CD8-positive, alpha-beta T cell (primary cell): ENCODE measurements at regions of chr2 and their contacts with region 1.

Region 1: GRCh38 chr2:237744613-237745249 is 53.8 kb upstream of the RBM44 start:
- DNase-seq: peak; percentile 59 to 90 (median 79)
- ATAC-seq: peak; percentile 78
- H3K4me3 ChIP-seq: no peak overlapping the region
- H3K4me3 Mint-ChIP-seq: no peak overlapping the region
- H3K27ac ChIP-seq: peak overlapping the region in 1 of 2 experiments; percentile 37
- H3K27ac Mint-ChIP-seq: peak overlapping the region; percentile 76
- H3K4me1 ChIP-seq: peaks cover 6% of the 10 kb centered on the region
- H3K4me1 Mint-ChIP-seq: peaks cover 41% of the 10 kb centered on the region
- H3K27me3 ChIP-seq: no peaks in the 10 kb centered on the region
- H3K27me3 Mint-ChIP-seq: no peaks in the 10 kb centered on the region
- CTCF ChIP-seq: peak; percentile 98

Region 2: GRCh38 chr2:236691799-236692167 is 1052.9 kb before region 1 on chr2:
- CTCF ChIA-PET with region 1: no interaction called
- POLR2A ChIA-PET with region 1: no interaction called
- intact Hi-C with region 1: no loop called
- DNase-seq: no peak
- ATAC-seq: no peak
- H3K4me3 ChIP-seq: no peak overlapping the region
- H3K4me3 Mint-ChIP-seq: no peak overlapping the region
- H3K27ac ChIP-seq: no peak overlapping the region
- H3K27ac Mint-ChIP-seq: no peak overlapping the region
- H3K4me1 ChIP-seq: no peaks in the 10 kb centered on the region
- H3K4me1 Mint-ChIP-seq: no peaks in the 10 kb centered on the region
- H3K27me3 ChIP-seq: peaks cover 0 to 2% of the 10 kb centered on the region in 2 experiments
- H3K27me3 Mint-ChIP-seq: peaks cover 12% of the 10 kb centered on the region
- CTCF ChIP-seq: no peak

Region 3: GRCh38 chr2:237154082-237154638 is 590.6 kb before region 1 on chr2:
- CTCF ChIA-PET with region 1: interaction called, 3 read pairs
- POLR2A ChIA-PET with region 1: no interaction called
- intact Hi-C with region 1: loop called in 1 of 2 experiments (anchors 5 kb)
- DNase-seq: peak in 8 of 9 experiments; percentile 34 to 75 (median 54)
- ATAC-seq: peak; percentile 81
- H3K4me3 ChIP-seq: no peak overlapping the region
- H3K4me3 Mint-ChIP-seq: no peak overlapping the region
- H3K27ac ChIP-seq: no peak overlapping the region
- H3K27ac Mint-ChIP-seq: no peak overlapping the region
- H3K4me1 ChIP-seq: peaks cover 14% of the 10 kb centered on the region
- H3K4me1 Mint-ChIP-seq: peaks cover 20% of the 10 kb centered on the region
- H3K27me3 ChIP-seq: no peaks in the 10 kb centered on the region
- H3K27me3 Mint-ChIP-seq: no peaks in the 10 kb centered on the region
- CTCF ChIP-seq: peak; percentile 59

Region 4: GRCh38 chr2:237572021-237572741 is 172.6 kb before region 1 on chr2:
- CTCF ChIA-PET with region 1: interaction called, 12 read pairs
- POLR2A ChIA-PET with region 1: no interaction called
- intact Hi-C with region 1: no loop called
- DNase-seq: peak; percentile 67 to 92 (median 85)
- ATAC-seq: peak; percentile 94
- H3K4me3 ChIP-seq: no peak overlapping the region
- H3K4me3 Mint-ChIP-seq: no peak overlapping the region
- H3K27ac ChIP-seq: no peak overlapping the region
- H3K27ac Mint-ChIP-seq: no peak overlapping the region
- H3K4me1 ChIP-seq: no peaks in the 10 kb centered on the region
- H3K4me1 Mint-ChIP-seq: peaks cover 3% of the 10 kb centered on the region
- H3K27me3 ChIP-seq: no peaks in the 10 kb centered on the region
- H3K27me3 Mint-ChIP-seq: peaks cover 11% of the 10 kb centered on the region
- CTCF ChIP-seq: peak; percentile 91

Region 5: DNA sequence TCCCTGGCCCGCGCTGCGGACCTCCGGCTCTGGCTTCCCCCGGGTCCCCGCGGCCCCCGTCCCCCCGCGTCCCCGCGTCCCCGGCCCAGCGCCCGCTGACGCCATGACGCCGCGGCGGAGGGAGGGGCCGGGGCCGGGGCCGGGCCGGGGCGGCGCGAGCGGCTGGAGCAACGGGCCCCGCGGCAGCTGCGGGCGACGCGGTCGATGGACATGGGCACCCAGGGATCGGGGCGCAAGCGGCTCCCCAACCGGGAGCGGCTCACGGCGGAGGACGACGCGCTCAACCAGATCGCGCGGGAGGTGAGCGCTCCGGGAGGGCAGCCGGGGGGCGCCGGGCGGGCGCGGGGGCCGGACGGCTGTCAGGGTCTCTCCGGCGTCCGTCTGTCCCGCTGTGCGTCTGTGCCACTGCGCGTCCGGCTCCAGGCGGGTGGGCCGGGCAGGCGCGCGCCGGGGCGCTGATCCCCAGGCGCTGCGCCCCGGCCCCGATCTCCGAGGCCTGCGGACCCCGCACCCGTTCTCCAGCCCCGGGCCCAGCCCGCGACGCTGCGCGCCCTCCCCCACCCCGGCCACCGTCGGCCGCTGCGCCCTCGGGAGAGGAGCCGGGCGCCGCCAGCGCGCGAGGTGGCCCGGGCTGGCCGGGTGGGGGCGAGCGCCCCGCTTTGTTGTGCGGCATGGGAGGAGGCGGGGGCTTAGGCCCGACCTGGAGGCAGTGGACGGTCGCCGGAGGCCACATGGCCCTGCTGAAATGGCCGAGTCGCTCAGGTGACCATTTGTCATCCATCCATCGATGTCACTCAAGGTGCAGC is 117.1 kb before region 1 on chr2 and contains the start of gene LRRFIP1:
- CTCF ChIA-PET with region 1: interaction called, 29 read pairs
- POLR2A ChIA-PET with region 1: no interaction called
- intact Hi-C with region 1: loop called in 1 of 2 experiments (anchors 1 kb)
- DNase-seq: peak in 3 of 9 experiments; percentile 20 to 32 (median 26)
- ATAC-seq: peak; percentile 72
- H3K4me3 ChIP-seq: peak within 1 kb of the TSS; percentile 24 to 29
- H3K4me3 Mint-ChIP-seq: peak within 1 kb of the TSS; percentile 88
- H3K27ac ChIP-seq: no peak within 1 kb of the TSS
- H3K27ac Mint-ChIP-seq: peak within 1 kb of the TSS; percentile 83
- H3K4me1 ChIP-seq: peaks cover 8% of the 10 kb centered on the region
- H3K4me1 Mint-ChIP-seq: peaks cover 26% of the 10 kb centered on the region
- H3K27me3 ChIP-seq: peaks cover 0 to 6% of the 10 kb centered on the region in 2 experiments
- H3K27me3 Mint-ChIP-seq: peaks cover 20% of the 10 kb centered on the region
- CTCF ChIP-seq: no peak
- total RNA-seq, gene LRRFIP1: 127 to 128 TPM

Region 6: DNA sequence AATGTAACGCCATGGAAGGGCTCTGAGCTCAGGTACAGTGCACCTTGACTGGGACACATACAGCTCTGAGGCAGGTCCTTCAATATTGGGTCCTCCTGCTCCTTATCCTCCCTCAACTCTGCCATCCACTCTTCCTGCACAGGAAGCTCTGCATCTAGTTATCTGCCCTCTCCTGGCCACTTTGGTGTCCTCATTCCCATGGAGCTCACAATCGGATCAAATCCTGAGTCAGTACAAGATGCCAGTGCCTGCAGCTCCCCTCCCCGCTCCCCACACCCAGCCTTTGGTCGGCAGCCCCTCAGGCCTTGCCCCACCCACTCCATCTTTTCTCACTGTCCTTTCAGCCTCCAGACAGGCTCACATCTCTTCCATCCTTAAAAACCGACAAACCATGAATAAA is 59.3 kb before region 1 on chr2:
- CTCF ChIA-PET with region 1: interaction called, 18 read pairs
- POLR2A ChIA-PET with region 1: interaction called, 3 read pairs
- intact Hi-C with region 1: no loop called
- DNase-seq: no peak
- ATAC-seq: no peak
- H3K4me3 ChIP-seq: no peak overlapping the region
- H3K4me3 Mint-ChIP-seq: no peak overlapping the region
- H3K27ac ChIP-seq: no peak overlapping the region
- H3K27ac Mint-ChIP-seq: peak overlapping the region; percentile 80
- H3K4me1 ChIP-seq: peaks cover 36% of the 10 kb centered on the region
- H3K4me1 Mint-ChIP-seq: peaks cover 43% of the 10 kb centered on the region
- H3K27me3 ChIP-seq: no peaks in the 10 kb centered on the region
- H3K27me3 Mint-ChIP-seq: no peaks in the 10 kb centered on the region
- CTCF ChIP-seq: no peak

Region 7: DNA sequence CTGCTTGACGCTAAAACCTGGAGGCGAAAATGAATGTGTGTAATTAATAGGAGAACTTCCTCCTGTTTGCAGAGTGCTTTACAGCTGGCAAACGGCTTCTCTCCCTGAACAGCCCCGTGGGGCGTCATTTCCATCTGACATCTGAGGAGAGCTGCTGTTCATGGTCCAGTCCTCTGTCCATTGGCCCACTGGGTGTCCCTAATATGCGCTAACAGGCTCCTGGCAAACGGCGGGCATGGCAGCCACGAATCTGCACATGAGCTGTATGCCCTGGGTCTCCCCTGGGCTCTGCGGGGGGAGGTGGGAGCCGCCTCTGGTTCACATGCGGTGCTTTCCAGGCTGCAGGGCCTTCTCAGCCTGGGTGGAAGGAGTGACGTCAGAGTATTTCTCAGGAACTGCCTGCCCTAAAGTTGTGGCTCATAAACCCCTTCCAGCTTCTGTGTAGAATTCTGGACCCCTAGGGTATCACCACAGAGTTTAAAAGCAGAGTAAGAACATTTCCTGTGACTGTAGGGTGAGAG is 44.2 kb before region 1 on chr2:
- CTCF ChIA-PET with region 1: interaction called, 33 read pairs
- POLR2A ChIA-PET with region 1: interaction called, 4 read pairs
- intact Hi-C with region 1: loop called (anchors 1 to 5 kb)
- DNase-seq: peak in 6 of 9 experiments; percentile 40 to 93 (median 80)
- ATAC-seq: peak; percentile 76
- H3K4me3 ChIP-seq: no peak overlapping the region
- H3K4me3 Mint-ChIP-seq: peak overlapping the region; percentile 80
- H3K27ac ChIP-seq: peak overlapping the region; percentile 42 to 70
- H3K27ac Mint-ChIP-seq: peak overlapping the region; percentile 94
- H3K4me1 ChIP-seq: peaks cover 99% of the 10 kb centered on the region
- H3K4me1 Mint-ChIP-seq: peaks cover 95% of the 10 kb centered on the region
- H3K27me3 ChIP-seq: no peaks in the 10 kb centered on the region
- H3K27me3 Mint-ChIP-seq: no peaks in the 10 kb centered on the region
- CTCF ChIP-seq: no peak

Region 8: GRCh38 chr2:237731663-237732062 is 13.1 kb before region 1 on chr2:
- CTCF ChIA-PET with region 1: interaction called, 32 read pairs
- POLR2A ChIA-PET with region 1: interaction called, 4 read pairs
- intact Hi-C with region 1: no loop called
- DNase-seq: peak in 2 of 9 experiments; percentile 36 to 40
- ATAC-seq: peak; percentile 73
- H3K4me3 ChIP-seq: no peak overlapping the region
- H3K4me3 Mint-ChIP-seq: no peak overlapping the region
- H3K27ac ChIP-seq: peak overlapping the region in 1 of 2 experiments; percentile 22
- H3K27ac Mint-ChIP-seq: peak overlapping the region; percentile 3
- H3K4me1 ChIP-seq: peaks cover 25% of the 10 kb centered on the region
- H3K4me1 Mint-ChIP-seq: peaks cover 65% of the 10 kb centered on the region
- H3K27me3 ChIP-seq: no peaks in the 10 kb centered on the region
- H3K27me3 Mint-ChIP-seq: no peaks in the 10 kb centered on the region
- CTCF ChIP-seq: no peak

Region 9: DNA sequence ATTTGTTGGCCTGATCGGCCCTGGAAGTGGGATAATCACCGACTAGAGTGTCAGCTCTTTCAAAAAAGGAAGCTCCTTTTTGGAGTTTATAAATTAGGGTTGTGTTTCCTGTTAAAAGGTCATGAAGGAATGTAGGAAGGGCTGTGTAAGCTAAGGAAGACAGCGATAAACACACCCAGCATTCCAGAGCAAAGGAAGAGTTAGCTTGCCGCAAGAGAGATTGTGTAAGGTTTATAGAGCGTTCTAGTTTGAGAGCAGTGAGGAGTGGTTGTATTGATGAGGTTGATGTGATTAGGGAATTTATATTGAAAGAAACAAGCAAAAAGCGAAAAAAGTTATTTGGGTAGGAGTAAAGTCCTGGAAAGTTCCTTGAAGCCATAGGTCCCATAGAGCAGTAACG is 462.3 kb after region 1 on chr2:
- CTCF ChIA-PET with region 1: no interaction called
- POLR2A ChIA-PET with region 1: no interaction called
- intact Hi-C with region 1: no loop called
- DNase-seq: no peak
- ATAC-seq: no peak
- H3K4me3 ChIP-seq: no peak overlapping the region
- H3K4me3 Mint-ChIP-seq: no peak overlapping the region
- H3K27ac ChIP-seq: no peak overlapping the region
- H3K27ac Mint-ChIP-seq: no peak overlapping the region
- H3K4me1 ChIP-seq: peaks cover 11% of the 10 kb centered on the region
- H3K4me1 Mint-ChIP-seq: peaks cover 11% of the 10 kb centered on the region
- H3K27me3 ChIP-seq: no peaks in the 10 kb centered on the region
- H3K27me3 Mint-ChIP-seq: peaks cover 4% of the 10 kb centered on the region
- CTCF ChIP-seq: no peak